ENCODE measurements at regions of chr16 and their contacts with region 1.

Region 1: DNA sequence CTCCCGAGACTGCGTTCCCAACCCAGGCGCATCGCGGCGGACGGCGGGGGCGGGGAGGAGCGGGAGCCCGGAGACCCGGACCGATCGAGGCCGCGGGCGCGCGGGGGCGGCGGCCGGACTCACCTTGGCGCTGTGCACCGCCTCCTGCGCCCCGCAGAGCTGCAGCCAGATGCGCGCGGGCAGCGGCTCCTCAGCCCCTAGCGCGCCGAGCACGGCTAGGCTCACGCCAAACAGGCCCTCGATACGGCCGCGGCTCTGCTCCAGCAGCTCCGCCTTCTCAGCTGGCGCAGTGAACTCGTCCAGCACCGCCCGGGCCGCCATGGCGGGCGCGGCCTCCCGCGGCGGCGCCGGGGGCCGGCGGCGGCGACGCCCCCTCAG is 339 bp downstream of the N4BP1 start:
- DNase-seq: peak; percentile 66 to 87 (median 74)
- ATAC-seq: peak in 3 of 4 donors; percentile 46 to 77 (median 76)
- H3K4me3 ChIP-seq: peak overlapping the region; percentile 72 to 99 (median 90)
- H3K27ac ChIP-seq: peak overlapping the region; percentile 62 to 97 (median 90)
- H3K4me1 ChIP-seq: peaks cover 3 to 81% (median 45%) of the 10 kb centered on the region in 12 donors
- H3K27me3 ChIP-seq: no peaks in the 10 kb centered on the region
- CTCF ChIP-seq: no peak
- POLR2A ChIP-seq: no peak

Region 2: GRCh38 chr16:48385272-48386150 is 224.1 kb before region 1 on chr16 and contains the start of gene SIAH1:
- intact Hi-C with region 1: loop called in 2 of 10 experiments (anchors 2 to 10 kb)
- DNase-seq: peak; percentile 86 to 93 (median 89)
- ATAC-seq: peak; percentile 79 to 95 (median 93)
- H3K4me3 ChIP-seq: peak within 1 kb of the TSS; percentile 85 to 99 (median 95)
- H3K27ac ChIP-seq: peak within 1 kb of the TSS; percentile 97 to 100 (median 99)
- H3K4me1 ChIP-seq: peaks cover 6 to 50% (median 24%) of the 10 kb centered on the region in 12 donors
- H3K27me3 ChIP-seq: no peaks in the 10 kb centered on the region
- CTCF ChIP-seq: no peak
- POLR2A ChIP-seq: peak; percentile 55 to 87
- total RNA-seq, gene SIAH1: 10.9 to 21.5 (median 15.5) TPM

Region 3: GRCh38 chr16:48491517-48491916 is 118.1 kb before region 1 on chr16:
- intact Hi-C with region 1: no loop called
- DNase-seq: no peak
- ATAC-seq: no peak
- H3K4me3 ChIP-seq: no peak overlapping the region
- H3K27ac ChIP-seq: no peak overlapping the region
- H3K4me1 ChIP-seq: no peaks in the 10 kb centered on the region
- H3K27me3 ChIP-seq: no peaks in the 10 kb centered on the region
- CTCF ChIP-seq: no peak
- POLR2A ChIP-seq: no peak

Region 4: DNA sequence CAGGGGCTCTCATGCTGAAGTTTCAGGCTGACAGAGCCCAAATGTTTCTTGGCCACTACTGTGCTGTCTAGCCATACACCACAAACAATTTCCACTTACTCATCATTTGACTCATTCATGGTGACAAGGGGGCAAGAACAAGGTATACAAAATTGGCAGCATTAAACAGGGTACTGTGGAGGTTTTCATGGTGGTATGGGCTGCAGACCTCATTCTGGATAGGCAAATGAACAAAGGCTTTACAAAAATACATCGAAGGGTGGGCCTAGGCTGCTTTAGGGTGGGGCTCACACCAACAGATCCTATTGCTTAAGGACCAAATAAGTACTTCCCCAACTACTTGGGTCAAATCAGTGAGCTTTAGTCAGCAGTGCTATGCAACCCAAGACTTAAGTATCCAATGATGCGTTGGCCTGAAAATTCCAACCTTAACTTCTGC is 52.7 kb before region 1 on chr16:
- intact Hi-C with region 1: loop called in 8 of 10 experiments (anchors 5 to 10 kb)
- DNase-seq: no peak
- ATAC-seq: peak in 2 of 4 donors; percentile 38 to 63
- H3K4me3 ChIP-seq: no peak overlapping the region
- H3K27ac ChIP-seq: peak overlapping the region in 1 of 12 donors; percentile 79
- H3K4me1 ChIP-seq: peaks cover 13 to 100% (median 77%) of the 10 kb centered on the region in 12 donors
- H3K27me3 ChIP-seq: no peaks in the 10 kb centered on the region
- CTCF ChIP-seq: no peak
- POLR2A ChIP-seq: no peak

Region 5: GRCh38 chr16:48565752-48566151 is 43.9 kb before region 1 on chr16:
- intact Hi-C with region 1: loop called in 4 of 10 experiments (anchors 5 kb)
- DNase-seq: no peak
- ATAC-seq: no peak
- H3K4me3 ChIP-seq: no peak overlapping the region
- H3K27ac ChIP-seq: no peak overlapping the region
- H3K4me1 ChIP-seq: peaks cover 0 to 72% (median 13%) of the 10 kb centered on the region in 12 donors
- H3K27me3 ChIP-seq: no peaks in the 10 kb centered on the region
- CTCF ChIP-seq: no peak
- POLR2A ChIP-seq: no peak

Region 6: DNA sequence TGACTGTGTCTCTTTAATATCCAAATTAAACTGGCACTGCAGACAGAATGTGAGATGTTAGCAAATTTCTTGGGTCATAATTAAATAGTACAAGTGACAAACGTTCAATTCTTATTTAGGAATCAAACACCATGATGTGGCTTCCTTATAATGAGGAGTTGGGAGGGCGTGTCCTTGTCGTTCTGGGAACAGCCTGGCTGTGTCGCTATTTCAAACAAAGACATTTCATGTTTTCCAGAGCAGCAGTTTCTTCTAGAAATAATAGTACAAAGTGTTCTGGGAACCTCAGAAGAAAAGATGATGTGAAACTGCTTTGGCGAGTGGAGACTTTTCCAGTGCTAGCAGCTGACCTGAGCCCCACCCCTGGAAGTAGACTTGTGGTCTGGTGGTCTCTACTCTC is 302.1 kb after region 1 on chr16:
- intact Hi-C with region 1: no loop called
- DNase-seq: no peak
- ATAC-seq: no peak
- H3K4me3 ChIP-seq: no peak overlapping the region
- H3K27ac ChIP-seq: no peak overlapping the region
- H3K4me1 ChIP-seq: no peaks in the 10 kb centered on the region
- H3K27me3 ChIP-seq: peaks cover 0 to 11% (median 0%) of the 10 kb centered on the region in 9 donors
- CTCF ChIP-seq: peak in 7 of 12 donors; percentile 19 to 40 (median 31)
- POLR2A ChIP-seq: no peak